ENCODE measurements at regions of chr21 and their contacts with region 1.

Region 1: DNA sequence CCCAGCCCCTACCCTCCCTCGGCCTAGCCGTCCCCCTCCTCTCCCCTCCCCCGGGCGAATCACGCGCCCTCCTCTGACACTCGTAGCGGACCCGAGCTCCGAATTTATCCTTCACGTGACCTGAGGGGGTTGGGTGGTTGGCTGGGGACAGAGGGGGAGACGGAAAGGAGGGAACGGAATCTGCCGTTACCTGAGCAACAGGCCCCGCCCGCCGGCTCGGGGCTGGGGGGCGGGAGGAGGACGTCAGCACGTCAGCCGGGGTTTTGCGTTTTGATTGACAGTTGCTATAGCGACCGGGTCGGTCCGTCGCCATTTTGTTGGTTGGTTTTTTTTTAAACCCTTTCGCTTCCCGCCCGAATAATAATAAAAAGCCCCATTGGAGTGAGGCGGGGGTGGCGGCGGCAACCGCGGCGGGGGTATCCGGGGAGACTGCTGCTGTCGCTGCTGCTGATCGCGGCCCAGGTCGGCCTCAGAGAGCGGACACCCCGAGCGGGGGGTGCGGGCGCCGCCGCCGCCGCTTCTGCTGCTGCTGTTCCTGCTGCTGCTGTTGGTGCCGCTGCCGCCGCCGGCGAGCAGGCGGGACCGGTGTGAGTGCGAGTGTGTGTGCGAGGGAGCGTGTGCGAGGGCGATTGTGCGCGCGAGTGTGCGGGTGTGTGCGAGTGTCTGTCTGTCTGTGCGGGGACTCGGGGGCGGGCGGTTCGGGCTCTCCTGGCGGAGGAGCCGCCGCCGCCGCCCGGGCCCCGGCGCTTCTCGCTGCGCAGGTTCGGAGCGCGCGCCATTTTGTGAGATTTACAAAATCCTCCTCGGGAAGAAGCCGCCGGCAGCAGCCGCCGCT is at the start of gene DYRK1A:
- DNase-seq: peak; percentile 98
- H3K4me3 Mint-ChIP-seq: peak within 1 kb of the TSS; percentile 96
- H3K27ac Mint-ChIP-seq: peak within 1 kb of the TSS; percentile 99
- H3K4me1 Mint-ChIP-seq: peaks cover 44% of the 10 kb centered on the region
- H3K27me3 Mint-ChIP-seq: no peaks in the 10 kb centered on the region
- total RNA-seq, gene DYRK1A: 73.6 to 74.1 TPM

Region 2: GRCh38 chr21:37220981-37221664 is 145.6 kb before region 1 on chr21:
- CTCF ChIA-PET with region 1: interaction called, 7 read pairs
- POLR2A ChIA-PET with region 1: interaction called, 16 read pairs
- DNase-seq: peak; percentile 92
- H3K4me3 Mint-ChIP-seq: peak overlapping the region; percentile 84
- H3K27ac Mint-ChIP-seq: peak overlapping the region; percentile 88
- H3K4me1 Mint-ChIP-seq: peaks cover 56% of the 10 kb centered on the region
- H3K27me3 Mint-ChIP-seq: no peaks in the 10 kb centered on the region

Region 3: DNA sequence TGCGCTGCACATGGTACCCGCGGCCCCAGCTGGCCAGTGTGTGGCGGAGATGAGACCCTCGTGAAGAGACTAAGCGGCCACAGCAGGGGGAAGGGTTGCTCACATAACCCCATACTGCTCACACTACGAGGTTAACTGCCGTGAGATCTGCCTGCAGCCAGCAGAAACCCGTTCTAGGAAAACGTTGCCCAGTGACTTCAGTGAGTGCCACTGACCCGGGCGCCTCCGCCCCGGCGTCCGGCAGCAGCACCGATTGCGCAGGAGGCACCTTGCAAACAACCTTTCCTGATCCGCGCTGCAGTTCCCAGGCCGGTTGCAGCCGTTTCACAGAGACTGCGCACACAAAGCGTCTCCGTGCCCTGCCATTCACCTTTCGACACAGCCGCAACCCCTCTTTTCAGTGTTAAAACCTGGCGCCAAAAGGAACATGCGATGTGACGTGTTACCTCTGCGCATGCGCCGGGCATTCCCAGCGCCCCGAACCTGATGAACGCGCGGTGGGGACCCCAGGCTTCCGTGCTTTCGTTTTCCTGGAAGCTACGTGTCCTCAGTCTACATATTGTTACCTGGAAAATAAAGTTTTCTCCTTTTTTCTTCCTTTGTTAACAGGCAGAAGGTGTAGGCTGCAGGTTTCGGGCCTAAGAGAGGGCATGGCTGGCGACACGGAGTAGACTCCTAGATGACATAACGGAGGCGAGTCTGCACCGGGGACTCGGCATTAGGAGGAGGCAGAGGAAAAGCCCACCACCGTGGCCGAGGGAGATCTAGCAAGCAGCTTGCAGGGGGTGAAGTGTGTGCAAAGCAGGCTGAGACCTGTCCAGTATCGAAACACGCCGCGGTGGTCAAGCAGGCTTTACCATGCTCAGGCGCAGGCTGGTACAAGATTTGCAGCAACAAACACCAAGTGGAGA is 108.5 kb before region 1 on chr21:
- CTCF ChIA-PET with region 1: no interaction called
- POLR2A ChIA-PET with region 1: interaction called, 35 read pairs
- DNase-seq: peak; percentile 88
- H3K4me3 Mint-ChIP-seq: peak overlapping the region; percentile 84
- H3K27ac Mint-ChIP-seq: peak overlapping the region; percentile 96
- H3K4me1 Mint-ChIP-seq: peaks cover 45% of the 10 kb centered on the region
- H3K27me3 Mint-ChIP-seq: no peaks in the 10 kb centered on the region

Region 4: DNA sequence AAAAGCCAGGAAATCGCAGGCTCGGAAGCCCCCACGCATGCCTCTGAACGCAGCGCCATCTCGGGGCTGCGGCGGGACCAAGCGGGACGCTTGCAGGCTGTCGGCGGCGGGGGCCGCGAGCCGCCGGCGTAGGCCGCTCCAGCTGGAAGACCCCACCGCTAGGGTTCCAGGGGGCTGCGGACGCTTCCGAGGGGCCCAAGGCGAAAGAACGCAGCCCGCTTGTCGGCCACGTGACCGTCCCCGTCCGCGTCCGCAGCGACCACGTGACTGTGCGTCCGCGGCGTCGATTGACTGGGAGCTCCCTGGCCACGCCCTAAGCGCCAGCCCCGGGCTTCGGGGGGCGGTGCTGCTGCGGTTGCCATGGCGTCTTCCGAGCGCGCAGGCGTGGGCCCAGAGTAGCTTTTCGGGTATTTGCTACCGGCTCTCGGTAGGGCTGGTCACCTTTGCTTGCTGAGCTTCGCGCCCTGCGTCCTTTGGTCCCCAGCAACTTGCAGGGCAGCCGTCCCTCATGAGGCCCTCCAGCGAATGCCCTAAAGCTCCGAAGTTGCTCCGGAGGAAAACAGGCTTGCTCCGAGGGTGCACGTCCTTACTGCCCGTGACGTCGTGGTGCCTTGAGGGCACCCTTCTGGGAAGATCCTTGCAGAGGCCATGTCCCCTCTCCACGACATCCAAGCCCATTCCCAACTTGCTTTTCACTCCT is 197.1 kb after region 1 on chr21:
- CTCF ChIA-PET with region 1: interaction called, 9 read pairs
- POLR2A ChIA-PET with region 1: interaction called, 25 read pairs
- DNase-seq: peak; percentile 92
- H3K4me3 Mint-ChIP-seq: peak overlapping the region; percentile 91
- H3K27ac Mint-ChIP-seq: peak overlapping the region; percentile 99
- H3K4me1 Mint-ChIP-seq: peaks cover 24% of the 10 kb centered on the region
- H3K27me3 Mint-ChIP-seq: peaks cover 2% of the 10 kb centered on the region

Region 5: GRCh38 chr21:38196036-38196435 is 829.3 kb after region 1 on chr21:
- CTCF ChIA-PET with region 1: no interaction called
- POLR2A ChIA-PET with region 1: no interaction called
- DNase-seq: no peak
- H3K4me3 Mint-ChIP-seq: no peak overlapping the region
- H3K27ac Mint-ChIP-seq: no peak overlapping the region
- H3K4me1 Mint-ChIP-seq: no peaks in the 10 kb centered on the region
- H3K27me3 Mint-ChIP-seq: no peaks in the 10 kb centered on the region

Measured in activated CD4-positive, alpha-beta memory T cell treated with anti-CD3 and anti-CD28 coated beads, Interleukin-2, amount 10 ng/mL, durations not matched to agents 7 days and 5 days (primary cell).